Gastrocnemius medialis (tissue), 4 donors: ENCODE measurements at regions of chr6 and their contacts with region 1.

Region 1: GRCh38 chr6:43454696-43455530 is 435 bp downstream of the DLK2 start:
- DNase-seq: peak; percentile 63 to 75
- ATAC-seq: peak; percentile 84 to 89
- H3K4me3 ChIP-seq: peak overlapping the region; percentile 48 to 61 (median 53)
- H3K27ac ChIP-seq: no peak overlapping the region
- H3K4me1 ChIP-seq: peaks cover 3 to 7% of the 10 kb centered on the region in 2 donors
- H3K27me3 ChIP-seq: peaks cover 25 to 49% (median 34%) of the 10 kb centered on the region in 3 donors
- CTCF ChIP-seq: peak in 2 of 5 experiments; percentile 7 to 14
- POLR2A ChIP-seq: no peak

Region 2: GRCh38 chr6:43308101-43308989 is 146.6 kb before region 1 on chr6 and contains the start of gene CRIP3:
- in situ Hi-C with region 1: no loop called
- intact Hi-C with region 1: no loop called
- DNase-seq: no peak
- ATAC-seq: peak; percentile 42 to 58
- H3K4me3 ChIP-seq: peak within 1 kb of the TSS; percentile 14 to 54 (median 40)
- H3K27ac ChIP-seq: no peak within 1 kb of the TSS
- H3K4me1 ChIP-seq: peaks cover 4 to 8% of the 10 kb centered on the region in 2 donors
- H3K27me3 ChIP-seq: peaks cover 8 to 22% (median 13%) of the 10 kb centered on the region in 3 donors
- CTCF ChIP-seq: no peak
- POLR2A ChIP-seq: no peak
- total RNA-seq, gene CRIP3: 0.68 TPM in 1 of 4 donors, not detected in the others

Region 3: DNA sequence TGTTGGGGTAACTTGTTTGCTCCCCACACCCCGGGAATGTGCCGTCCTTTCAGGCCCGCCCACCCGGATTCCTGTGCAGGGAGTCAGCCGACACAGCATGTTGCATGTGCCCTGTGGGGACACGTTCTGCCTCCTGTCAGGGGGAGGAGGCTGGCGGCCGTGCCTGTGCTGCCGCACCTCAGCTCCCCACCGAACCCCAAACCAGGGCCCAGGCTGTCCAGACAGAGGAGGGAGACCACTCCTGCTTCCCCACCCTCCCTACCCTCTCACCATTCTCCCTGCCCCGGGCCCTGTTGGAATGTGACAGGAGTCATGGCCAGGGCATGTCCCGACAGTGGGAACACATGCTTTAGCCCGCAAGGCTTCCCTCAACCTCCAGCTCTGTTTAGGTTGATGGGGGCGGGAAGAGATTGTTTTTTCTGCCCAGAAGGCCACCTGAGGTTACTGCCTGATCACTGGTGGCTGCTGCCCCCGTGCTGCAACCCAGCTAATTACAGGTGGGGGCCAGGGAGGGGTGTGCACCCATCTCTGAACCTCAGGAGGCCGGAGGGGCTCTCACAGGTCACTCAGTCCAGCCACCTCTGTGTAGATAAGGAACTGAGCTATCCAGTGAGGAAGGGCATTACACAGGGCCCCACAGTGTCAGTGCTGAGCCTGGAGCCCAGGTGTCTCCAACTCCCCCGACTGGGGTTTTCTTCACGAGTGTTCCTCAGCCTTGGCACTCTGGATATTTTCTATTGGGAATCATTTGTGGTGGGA is 41.6 kb after region 1 on chr6:
- in situ Hi-C with region 1: loop called (anchors 5 to 10 kb)
- intact Hi-C with region 1: loop called (anchors 1 kb)
- DNase-seq: no peak
- ATAC-seq: peak in 1 of 2 donors; percentile 7
- H3K4me3 ChIP-seq: no peak overlapping the region
- H3K27ac ChIP-seq: peak overlapping the region in 1 of 4 donors; percentile 70
- H3K4me1 ChIP-seq: peaks cover 14 to 31% of the 10 kb centered on the region in 2 donors
- H3K27me3 ChIP-seq: no peaks in the 10 kb centered on the region
- CTCF ChIP-seq: peak; percentile 46 to 74 (median 63)
- POLR2A ChIP-seq: no peak

Region 4: DNA sequence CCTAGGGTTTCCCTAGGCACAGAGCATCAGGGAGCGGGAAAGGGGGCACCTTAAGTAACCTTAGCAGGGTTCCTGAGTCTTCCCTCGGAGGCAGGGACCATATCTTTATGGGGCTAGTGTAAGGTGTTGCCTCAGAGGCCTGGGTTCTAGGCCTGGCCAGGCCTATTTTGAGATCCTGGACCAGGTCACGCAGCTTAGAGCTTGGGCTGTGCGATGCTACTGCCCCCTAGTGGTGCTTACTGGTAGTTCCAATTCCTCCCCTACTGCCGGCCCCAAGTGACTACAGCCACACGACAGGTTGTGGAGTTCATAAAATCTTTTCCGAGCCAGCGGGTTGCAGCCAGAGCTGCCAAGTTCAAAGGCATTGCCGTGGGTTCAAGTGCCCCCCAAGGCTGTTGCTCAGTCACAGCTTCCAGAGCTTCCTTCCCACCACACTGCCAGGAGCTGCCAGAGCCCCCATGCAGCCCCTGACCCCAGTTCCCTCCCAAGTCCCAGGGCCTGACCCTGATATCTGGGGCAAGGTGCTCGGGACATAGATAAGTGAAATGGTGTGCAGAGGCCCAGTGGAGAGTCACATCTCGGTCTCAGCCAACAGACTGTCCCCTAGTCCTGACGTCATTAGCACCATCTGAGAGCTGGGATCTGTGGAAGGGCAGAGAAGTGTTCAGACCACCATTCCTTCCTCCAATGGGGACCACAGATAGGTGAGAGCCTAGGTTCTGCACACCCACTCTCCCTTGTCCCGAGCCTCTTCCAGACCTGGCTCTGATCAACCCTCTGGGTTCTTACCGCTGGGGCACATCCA is 52.0 kb after region 1 on chr6:
- in situ Hi-C with region 1: loop called (anchors 5 to 10 kb)
- intact Hi-C with region 1: loop called (anchors 1 kb)
- DNase-seq: peak; percentile 52 to 75
- ATAC-seq: peak; percentile 70 to 79
- H3K4me3 ChIP-seq: no peak overlapping the region
- H3K27ac ChIP-seq: no peak overlapping the region
- H3K4me1 ChIP-seq: peaks cover 7 to 12% of the 10 kb centered on the region in 2 donors
- H3K27me3 ChIP-seq: peaks cover 4 to 7% (median 6%) of the 10 kb centered on the region in 3 donors
- CTCF ChIP-seq: peak; percentile 83 to 98 (median 96)
- POLR2A ChIP-seq: no peak